ENCODE measurements at regions of chr11 and their contacts with region 1.

Region 1: GRCh38 chr11:104946907-104947306 is 21.5 kb downstream of the CASP4 start:
- DNase-seq: no peak
- H3K4me3 Mint-ChIP-seq: no peak overlapping the region
- H3K27ac Mint-ChIP-seq: no peak overlapping the region
- H3K4me1 Mint-ChIP-seq: peaks cover 5% of the 10 kb centered on the region
- H3K27me3 Mint-ChIP-seq: no peaks in the 10 kb centered on the region

Region 2: DNA sequence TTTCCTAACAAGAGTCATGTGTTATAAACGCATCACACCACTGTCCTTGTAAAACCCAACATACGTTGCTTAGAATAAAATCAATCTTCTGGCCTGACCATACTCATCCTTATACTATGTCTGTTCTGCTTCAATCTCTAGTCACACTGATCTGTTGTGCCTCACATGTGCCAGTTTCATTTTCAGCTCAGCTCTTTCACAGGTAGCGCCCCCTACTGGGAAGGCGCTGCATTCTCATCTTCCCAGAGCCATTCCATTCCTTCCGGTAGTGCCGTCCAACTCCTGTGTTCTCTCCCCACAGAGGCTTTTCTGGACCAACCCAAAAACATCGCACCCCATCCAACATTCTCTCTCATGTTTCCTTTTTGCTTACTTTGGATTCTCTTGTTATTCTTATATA is 53.9 kb after region 1 on chr11:
- intact Hi-C with region 1: loop called (anchors 5 kb)
- DNase-seq: peak; percentile 31
- H3K4me3 Mint-ChIP-seq: no peak overlapping the region
- H3K27ac Mint-ChIP-seq: no peak overlapping the region
- H3K4me1 Mint-ChIP-seq: peaks cover 5% of the 10 kb centered on the region
- H3K27me3 Mint-ChIP-seq: peaks cover 1% of the 10 kb centered on the region

Region 3: DNA sequence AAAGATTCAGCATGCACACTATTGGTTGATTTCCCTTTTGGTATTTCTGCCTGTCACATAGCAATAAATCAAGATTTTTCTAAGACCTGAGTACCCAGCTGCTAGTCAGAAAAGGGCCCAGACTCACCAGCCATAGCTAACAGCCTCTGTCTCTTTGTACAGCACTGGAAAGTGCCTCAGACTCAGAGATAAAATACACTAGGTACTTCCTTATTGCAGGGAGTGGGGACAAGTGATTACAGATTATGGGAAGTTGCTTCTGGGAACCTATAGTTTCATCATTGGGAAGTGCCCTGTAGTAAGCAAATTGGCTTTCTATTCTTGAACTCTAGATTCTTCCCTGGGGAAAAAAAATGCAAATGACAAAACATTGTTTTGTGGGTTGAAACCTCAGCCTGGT is 76.1 kb after region 1 on chr11 and contains the start of gene CASP5:
- intact Hi-C with region 1: no loop called
- DNase-seq: no peak
- H3K4me3 Mint-ChIP-seq: no peak within 1 kb of the TSS
- H3K27ac Mint-ChIP-seq: no peak within 1 kb of the TSS
- H3K4me1 Mint-ChIP-seq: peaks cover 6% of the 10 kb centered on the region
- H3K27me3 Mint-ChIP-seq: no peaks in the 10 kb centered on the region
- total RNA-seq, gene CASP5: not detected in 2 replicates